ENCODE measurements at regions of chr1 and their contacts with region 1.

Region 1: DNA sequence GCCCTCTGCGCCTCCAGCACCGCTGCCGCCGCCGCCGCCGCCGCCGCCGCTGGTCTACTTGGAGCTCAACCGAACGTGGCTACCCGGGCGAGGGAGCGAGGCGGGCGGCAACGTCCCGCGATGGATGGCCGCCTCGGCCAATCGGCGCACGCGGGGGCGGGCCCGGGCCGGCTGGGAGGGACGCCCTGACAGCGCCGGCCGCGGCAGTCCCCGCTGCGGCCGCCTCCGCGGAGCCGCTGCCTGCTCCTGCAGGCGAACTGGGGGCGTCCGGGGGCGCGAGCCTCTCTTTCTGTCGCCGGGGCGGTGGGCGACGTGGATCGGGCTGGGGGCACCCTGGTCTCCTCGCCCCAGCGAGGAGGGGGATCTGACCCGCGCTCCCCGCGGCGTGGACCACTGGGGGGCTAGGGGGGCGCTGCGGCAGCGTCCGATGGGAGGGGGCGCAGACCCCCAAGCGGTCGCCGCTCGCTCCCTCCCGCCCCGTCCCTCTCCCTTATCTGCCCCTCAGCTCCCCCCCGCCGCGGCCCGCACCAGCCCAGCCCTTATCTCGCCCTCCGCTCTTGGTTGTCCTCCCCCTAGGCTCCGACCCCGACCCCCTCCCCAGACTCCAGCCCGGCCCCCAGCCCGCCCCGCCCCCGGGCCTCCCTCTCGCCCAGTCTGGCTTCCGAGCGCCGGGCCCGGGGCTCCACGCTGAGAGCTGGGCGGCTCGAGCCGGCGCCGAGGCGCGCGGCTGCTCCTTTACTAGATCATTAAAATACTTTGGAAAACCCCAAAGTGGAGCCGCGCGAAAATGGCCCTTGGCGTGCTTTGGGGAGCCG is at the start of gene SSBP3:
- DNase-seq: peak; percentile 89
- H3K4me3 Mint-ChIP-seq: peak within 1 kb of the TSS; percentile 83
- H3K27ac Mint-ChIP-seq: peak within 1 kb of the TSS; percentile 93
- H3K4me1 Mint-ChIP-seq: peaks cover 61% of the 10 kb centered on the region
- H3K27me3 Mint-ChIP-seq: no peaks in the 10 kb centered on the region
- total RNA-seq, gene SSBP3: 55.0 to 58.3 TPM

Region 2: GRCh38 chr1:53945433-53946251 is 460.9 kb before region 1 on chr1 and contains the start of gene IFT25:
- CTCF ChIA-PET with region 1: no interaction called
- intact Hi-C with region 1: loop called (anchors 5 kb)
- DNase-seq: peak; percentile 99
- H3K4me3 Mint-ChIP-seq: peak within 1 kb of the TSS; percentile 90
- H3K27ac Mint-ChIP-seq: peak within 1 kb of the TSS; percentile 87
- H3K4me1 Mint-ChIP-seq: peaks cover 45% of the 10 kb centered on the region
- H3K27me3 Mint-ChIP-seq: no peaks in the 10 kb centered on the region
- total RNA-seq, gene IFT25: 46.2 to 48.7 TPM

Region 3: DNA sequence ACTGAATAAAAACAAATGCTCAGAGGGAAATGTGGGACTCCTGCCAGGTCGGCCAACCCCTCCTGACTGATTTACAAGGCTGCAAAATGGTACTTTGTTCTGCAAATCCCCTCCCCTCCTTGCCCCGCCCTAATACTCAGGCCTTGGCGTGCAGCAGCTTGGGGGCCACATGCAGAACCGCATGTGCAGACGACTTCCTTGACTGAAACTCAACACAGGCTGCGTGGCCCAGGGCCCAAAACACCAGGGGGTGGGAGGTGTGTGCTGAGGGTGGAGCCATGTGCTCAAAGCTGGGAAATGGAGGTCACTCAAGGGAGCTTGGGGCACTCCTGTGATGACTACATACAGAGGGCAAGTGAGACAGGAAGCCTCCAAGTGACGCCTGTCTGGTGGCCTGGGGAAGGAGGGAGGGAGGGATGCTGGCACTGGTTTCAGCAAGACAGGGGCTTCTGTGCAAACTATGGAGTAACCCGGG is 119.3 kb before region 1 on chr1:
- CTCF ChIA-PET with region 1: no interaction called
- intact Hi-C with region 1: loop called (anchors 1 kb)
- DNase-seq: peak; percentile 92
- H3K4me3 Mint-ChIP-seq: peak overlapping the region; percentile 69
- H3K27ac Mint-ChIP-seq: peak overlapping the region; percentile 86
- H3K4me1 Mint-ChIP-seq: peaks cover 92% of the 10 kb centered on the region
- H3K27me3 Mint-ChIP-seq: no peaks in the 10 kb centered on the region

Region 4: DNA sequence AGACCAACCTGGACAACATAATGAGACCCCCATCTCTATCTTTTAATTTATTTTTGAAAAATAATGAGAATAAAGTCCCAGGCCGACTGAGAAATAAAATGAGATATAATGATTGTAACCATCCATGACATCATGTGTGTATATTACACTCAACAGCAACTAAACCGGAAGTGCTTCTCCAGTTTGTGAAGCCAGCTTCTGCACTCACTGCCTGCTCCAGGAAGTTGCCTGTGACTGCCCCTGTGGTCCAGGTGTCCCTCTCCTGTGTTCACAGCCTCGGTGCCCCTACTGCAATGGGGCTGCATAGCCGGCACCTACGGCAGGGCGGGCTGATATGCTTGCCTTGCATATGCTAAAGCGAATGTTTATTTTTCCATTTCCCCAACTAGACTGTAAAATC is 68.6 kb before region 1 on chr1:
- CTCF ChIA-PET with region 1: no interaction called
- intact Hi-C with region 1: no loop called
- DNase-seq: no peak
- H3K4me3 Mint-ChIP-seq: no peak overlapping the region
- H3K27ac Mint-ChIP-seq: no peak overlapping the region
- H3K4me1 Mint-ChIP-seq: peaks cover 52% of the 10 kb centered on the region
- H3K27me3 Mint-ChIP-seq: no peaks in the 10 kb centered on the region

Region 5: DNA sequence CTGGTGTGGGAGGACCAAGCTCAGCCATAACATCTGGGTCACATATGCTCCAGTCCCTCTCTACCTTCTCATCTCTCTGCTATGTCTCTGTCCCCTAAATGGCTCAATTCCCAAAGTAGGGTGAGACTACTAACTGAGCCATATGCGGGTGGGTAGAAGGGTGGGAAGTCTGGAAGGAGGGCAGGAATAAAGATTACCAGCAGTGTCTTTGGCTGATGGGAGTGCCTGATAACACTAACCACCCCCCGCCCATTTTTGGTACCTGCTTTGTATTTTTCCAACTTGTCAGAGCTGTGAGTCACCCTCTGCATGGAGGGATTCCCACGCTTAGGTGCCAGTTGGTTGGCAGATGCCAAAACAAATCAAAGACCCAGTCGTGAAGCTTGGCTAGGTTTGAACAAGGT is 14.6 kb after region 1 on chr1:
- CTCF ChIA-PET with region 1: no interaction called
- intact Hi-C with region 1: loop called (anchors 1 kb)
- DNase-seq: no peak
- H3K4me3 Mint-ChIP-seq: no peak overlapping the region
- H3K27ac Mint-ChIP-seq: no peak overlapping the region
- H3K4me1 Mint-ChIP-seq: no peaks in the 10 kb centered on the region
- H3K27me3 Mint-ChIP-seq: no peaks in the 10 kb centered on the region

Region 6: GRCh38 chr1:54542120-54542961 is 135.8 kb after region 1 on chr1:
- CTCF ChIA-PET with region 1: no interaction called
- intact Hi-C with region 1: loop called (anchors 1 kb)
- DNase-seq: peak; percentile 85
- H3K4me3 Mint-ChIP-seq: peak overlapping the region; percentile 70
- H3K27ac Mint-ChIP-seq: no peak overlapping the region
- H3K4me1 Mint-ChIP-seq: peaks cover 11% of the 10 kb centered on the region
- H3K27me3 Mint-ChIP-seq: no peaks in the 10 kb centered on the region

Region 7: DNA sequence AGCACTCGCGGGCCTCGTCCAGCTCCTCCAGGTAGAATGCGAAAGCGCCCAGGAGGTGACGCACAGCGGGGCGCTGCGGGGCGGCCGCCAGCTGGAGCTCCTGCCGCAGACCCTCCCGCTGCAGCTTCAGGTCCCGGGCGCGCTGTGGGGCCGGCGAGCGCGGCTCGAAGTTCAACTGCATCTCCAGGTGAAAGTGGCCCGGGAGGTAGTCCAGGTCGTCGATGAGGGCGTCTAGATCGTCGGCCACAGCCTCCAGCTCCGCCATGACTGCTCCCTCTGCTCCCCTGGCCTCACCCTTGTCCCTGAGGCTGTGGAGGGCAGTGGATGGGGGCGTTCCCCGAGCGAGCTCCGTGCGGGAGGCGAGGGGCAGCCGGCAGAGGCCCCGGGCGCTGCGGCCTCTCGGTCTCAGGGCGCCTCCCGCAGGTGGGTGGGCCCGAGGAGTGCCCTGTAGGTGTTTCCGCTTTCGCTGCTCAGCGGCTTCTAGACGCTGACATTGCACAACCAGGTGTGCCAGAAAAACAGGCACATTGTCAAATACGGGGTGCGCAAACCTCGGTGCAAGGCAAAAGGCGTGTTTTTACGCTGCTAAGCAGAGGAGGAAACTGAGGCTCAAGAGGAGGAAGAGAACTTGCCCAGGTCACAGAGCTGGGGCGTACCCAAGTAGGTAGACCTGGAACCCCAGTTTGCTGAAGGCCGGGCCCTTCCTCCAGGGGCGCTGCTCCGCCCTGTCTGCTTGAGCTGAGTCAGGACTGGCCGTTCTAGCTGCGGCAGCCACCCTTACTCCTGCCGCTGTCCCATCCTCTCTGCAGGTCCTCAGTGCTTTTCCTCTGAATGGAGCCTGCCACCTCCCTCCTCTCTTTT is 394.6 kb after region 1 on chr1 and contains the start of gene TTC22:
- CTCF ChIA-PET with region 1: no interaction called
- intact Hi-C with region 1: loop called (anchors 1 kb)
- DNase-seq: peak; percentile 86
- H3K4me3 Mint-ChIP-seq: peak within 1 kb of the TSS; percentile 90
- H3K27ac Mint-ChIP-seq: peak within 1 kb of the TSS; percentile 91
- H3K4me1 Mint-ChIP-seq: peaks cover 55% of the 10 kb centered on the region
- H3K27me3 Mint-ChIP-seq: no peaks in the 10 kb centered on the region
- total RNA-seq, gene TTC22: 6.9 to 8.6 TPM